Naive thymus-derived CD4-positive, alpha-beta T cell (primary cell): ENCODE measurements at regions of chr3 and their contacts with region 1.

Region 1: GRCh38 chr3:30353711-30354467 is 252.5 kb upstream of the TGFBR2 start:
- DNase-seq: peak; percentile 5 to 94 (median 87)
- ATAC-seq: peak; percentile 99
- H3K4me3 ChIP-seq: peak overlapping the region; percentile 36
- H3K4me3 Mint-ChIP-seq: peak overlapping the region; percentile 65 to 81 (median 68)
- H3K27ac ChIP-seq: no peak overlapping the region
- H3K27ac Mint-ChIP-seq: peak overlapping the region; percentile 23 to 96 (median 90)
- H3K4me1 ChIP-seq: peaks cover 38 to 66% of the 10 kb centered on the region in 2 donors
- H3K4me1 Mint-ChIP-seq: peaks cover 50 to 96% (median 88%) of the 10 kb centered on the region in 7 donors
- H3K27me3 ChIP-seq: no peaks in the 10 kb centered on the region
- H3K27me3 Mint-ChIP-seq: peaks cover 0 to 50% (median 0%) of the 10 kb centered on the region in 5 donors

Region 2: DNA sequence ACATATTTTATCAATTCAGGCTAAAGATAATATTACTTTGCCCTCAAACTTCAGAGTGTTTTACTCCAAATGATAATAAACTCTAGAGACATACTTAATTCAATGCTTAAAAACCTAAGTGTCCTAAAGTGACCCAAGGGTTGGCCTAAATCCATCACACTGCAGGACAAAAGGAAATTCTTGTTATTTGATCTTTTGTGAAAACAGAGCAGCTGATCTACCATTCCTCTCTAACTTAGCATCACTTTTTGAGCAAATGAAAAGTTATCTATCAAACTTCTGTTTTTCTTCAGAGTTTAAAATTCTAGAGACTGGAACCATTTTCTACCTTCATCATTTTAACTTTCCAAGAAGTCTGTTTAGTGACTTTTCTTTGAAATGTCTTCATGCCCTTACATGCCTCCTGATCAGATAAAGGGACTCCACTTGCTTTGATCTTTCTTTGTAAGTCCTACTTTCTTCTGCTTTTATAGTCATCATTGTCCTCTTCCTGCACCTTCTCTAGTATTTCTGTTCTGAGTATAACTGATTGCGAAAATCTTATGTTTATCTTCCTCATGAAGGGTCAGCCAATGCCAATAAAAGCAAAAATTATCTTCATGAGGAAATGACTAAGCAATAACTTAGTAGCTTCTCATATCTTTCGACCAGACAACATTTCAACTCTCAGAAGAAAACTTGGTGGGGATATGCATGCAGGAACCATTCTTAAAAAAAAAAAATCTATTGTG is 126.2 kb before region 1 on chr3:
- CTCF ChIA-PET with region 1: no interaction called
- POLR2A ChIA-PET with region 1: no interaction called
- intact Hi-C with region 1: loop called in 1 of 2 experiments (anchors 5 kb)
- DNase-seq: peak in 4 of 9 donors; percentile 1 to 10 (median 6)
- ATAC-seq: peak; percentile 78
- H3K4me3 ChIP-seq: no peak overlapping the region
- H3K4me3 Mint-ChIP-seq: peak overlapping the region in 8 of 10 donors; percentile 4 to 67 (median 36)
- H3K27ac ChIP-seq: no peak overlapping the region
- H3K27ac Mint-ChIP-seq: peak overlapping the region in 6 of 9 donors; percentile 3 to 83 (median 15)
- H3K4me1 ChIP-seq: peaks cover 0 to 9% of the 10 kb centered on the region in 2 donors
- H3K4me1 Mint-ChIP-seq: peaks cover 15 to 41% (median 20%) of the 10 kb centered on the region in 7 donors
- H3K27me3 ChIP-seq: no peaks in the 10 kb centered on the region
- H3K27me3 Mint-ChIP-seq: peaks cover 0 to 8% (median 0%) of the 10 kb centered on the region in 5 donors

Region 3: DNA sequence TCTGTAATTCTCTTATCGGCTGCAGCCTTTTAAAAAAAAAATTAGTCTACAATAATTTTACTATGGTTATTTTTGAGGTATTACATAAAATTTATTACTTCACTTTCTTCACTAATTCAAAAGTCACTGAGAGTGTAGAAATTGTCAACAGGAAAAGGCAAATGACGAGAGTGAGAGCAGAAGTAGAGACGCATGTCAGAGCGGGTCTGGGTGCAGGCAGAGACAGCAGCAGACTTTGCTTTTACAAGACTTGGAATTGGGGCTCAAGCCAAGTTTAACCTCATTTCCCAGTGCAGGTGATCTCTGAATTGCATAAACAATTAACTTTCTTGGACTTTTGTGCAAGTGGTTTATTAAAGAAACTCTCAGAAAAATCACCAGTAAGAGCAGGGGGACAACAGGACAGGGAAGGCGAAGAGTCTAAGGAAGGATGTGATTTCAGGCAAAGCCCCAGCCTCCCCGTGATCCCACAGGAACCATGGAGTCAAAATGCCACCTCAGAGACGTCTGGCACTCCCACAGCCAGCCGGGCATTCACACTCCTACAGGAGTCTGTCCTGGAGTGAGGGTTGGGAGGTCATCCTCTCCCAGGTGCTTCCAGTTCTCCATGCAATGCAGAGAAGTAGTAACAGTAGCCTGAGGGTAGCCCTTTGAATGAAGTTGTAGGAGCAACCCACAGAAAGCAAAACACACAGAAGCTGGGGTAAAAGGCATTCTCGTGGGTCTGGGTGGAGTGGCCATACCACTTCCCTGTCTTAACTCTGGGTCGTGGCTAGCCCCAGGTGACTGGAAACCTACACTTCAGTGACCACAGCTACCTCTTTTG is 21.5 kb before region 1 on chr3:
- CTCF ChIA-PET with region 1: no interaction called
- POLR2A ChIA-PET with region 1: interaction called, 6 read pairs
- intact Hi-C with region 1: loop called in 1 of 2 experiments (anchors 1 kb)
- DNase-seq: peak in 7 of 9 donors; percentile 45 to 83 (median 76)
- ATAC-seq: peak; percentile 89
- H3K4me3 ChIP-seq: peak overlapping the region; percentile 35
- H3K4me3 Mint-ChIP-seq: peak overlapping the region; percentile 63 to 91 (median 84)
- H3K27ac ChIP-seq: peak overlapping the region; percentile 28
- H3K27ac Mint-ChIP-seq: peak overlapping the region; percentile 74 to 99 (median 96)
- H3K4me1 ChIP-seq: peaks cover 0 to 30% of the 10 kb centered on the region in 2 donors
- H3K4me1 Mint-ChIP-seq: peaks cover 4 to 58% (median 46%) of the 10 kb centered on the region in 7 donors
- H3K27me3 ChIP-seq: no peaks in the 10 kb centered on the region
- H3K27me3 Mint-ChIP-seq: no peaks in the 10 kb centered on the region

Region 4: DNA sequence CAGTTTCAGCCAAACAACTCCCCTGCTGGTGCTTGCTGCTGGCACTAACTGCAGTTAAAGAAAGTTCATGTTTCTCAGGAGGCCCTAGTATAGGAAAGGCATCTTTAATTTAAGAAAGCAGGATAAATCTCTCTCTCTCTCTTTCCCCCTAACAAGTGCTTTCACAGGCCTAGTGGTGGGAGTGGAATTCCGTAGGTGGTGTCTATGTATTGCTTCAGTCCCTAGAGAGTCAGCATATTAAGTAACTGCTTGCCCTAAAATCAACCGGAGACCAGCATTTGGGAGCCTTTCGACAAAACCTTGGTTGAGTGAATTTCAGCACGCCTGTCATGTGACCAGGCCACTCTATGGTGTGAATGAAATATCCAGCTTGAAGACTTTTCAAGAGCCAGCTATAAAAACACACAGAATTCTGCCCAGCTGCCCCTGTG is 83.3 kb after region 1 on chr3:
- CTCF ChIA-PET with region 1: no interaction called
- POLR2A ChIA-PET with region 1: interaction called, 3 read pairs
- intact Hi-C with region 1: loop called in 1 of 2 experiments (anchors 5 kb)
- DNase-seq: no peak
- ATAC-seq: no peak
- H3K4me3 ChIP-seq: no peak overlapping the region
- H3K4me3 Mint-ChIP-seq: peak overlapping the region in 6 of 10 donors; percentile 12 to 77 (median 22)
- H3K27ac ChIP-seq: no peak overlapping the region
- H3K27ac Mint-ChIP-seq: peak overlapping the region in 5 of 9 donors; percentile 15 to 94 (median 75)
- H3K4me1 ChIP-seq: peaks cover 0 to 23% of the 10 kb centered on the region in 2 donors
- H3K4me1 Mint-ChIP-seq: peaks cover 6 to 47% (median 35%) of the 10 kb centered on the region in 7 donors
- H3K27me3 ChIP-seq: no peaks in the 10 kb centered on the region
- H3K27me3 Mint-ChIP-seq: no peaks in the 10 kb centered on the region

Region 5: DNA sequence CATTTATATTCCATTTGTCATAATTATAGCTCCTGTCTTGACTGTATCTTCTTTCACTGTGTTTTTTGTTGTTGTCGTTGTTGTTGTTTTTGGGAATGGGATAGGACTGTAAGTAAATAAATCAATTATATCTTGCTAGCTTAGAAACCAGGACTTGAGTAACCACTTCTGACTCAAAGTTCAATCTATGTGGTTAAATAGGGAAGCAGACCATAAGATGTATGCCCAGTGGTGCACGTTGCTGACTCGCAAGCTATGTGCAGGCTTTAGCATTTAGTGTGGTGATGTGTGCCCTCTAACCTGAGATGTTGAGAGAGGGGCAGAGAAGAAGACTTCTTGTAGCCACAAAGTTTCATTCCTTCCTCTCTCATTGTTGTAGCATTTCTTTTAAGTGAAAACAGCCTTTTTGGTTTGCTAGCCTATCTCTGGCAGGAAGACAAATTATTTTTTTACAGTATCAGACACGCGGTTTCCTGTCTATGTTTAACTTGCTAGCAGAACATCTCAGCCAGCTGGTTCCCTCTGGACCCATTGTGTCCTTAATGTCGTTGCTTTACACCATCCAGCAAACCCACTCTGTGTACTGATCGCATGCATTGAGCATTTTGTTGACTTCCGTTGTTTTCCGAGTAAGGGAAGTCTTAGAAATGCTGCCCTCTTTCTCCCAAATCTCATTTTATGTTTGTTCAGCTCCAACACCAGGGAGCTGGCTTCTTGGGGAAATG is 304.6 kb after region 1 on chr3:
- CTCF ChIA-PET with region 1: no interaction called
- POLR2A ChIA-PET with region 1: interaction called, 9 read pairs
- intact Hi-C with region 1: loop called in 1 of 2 experiments (anchors 1 kb)
- DNase-seq: peak in 7 of 9 donors; percentile 72 to 86 (median 84)
- ATAC-seq: peak; percentile 71
- H3K4me3 ChIP-seq: peak overlapping the region; percentile 24
- H3K4me3 Mint-ChIP-seq: peak overlapping the region; percentile 71 to 88 (median 80)
- H3K27ac ChIP-seq: peak overlapping the region; percentile 84
- H3K27ac Mint-ChIP-seq: peak overlapping the region; percentile 91 to 99 (median 97)
- H3K4me1 ChIP-seq: peaks cover 82 to 98% of the 10 kb centered on the region in 2 donors
- H3K4me1 Mint-ChIP-seq: peaks cover 67 to 100% (median 94%) of the 10 kb centered on the region in 7 donors
- H3K27me3 ChIP-seq: no peaks in the 10 kb centered on the region
- H3K27me3 Mint-ChIP-seq: no peaks in the 10 kb centered on the region

Region 6: GRCh38 chr3:31219131-31219843 is 865.4 kb after region 1 on chr3:
- CTCF ChIA-PET with region 1: no interaction called
- POLR2A ChIA-PET with region 1: no interaction called
- intact Hi-C with region 1: loop called (anchors 5 to 10 kb)
- DNase-seq: no peak
- ATAC-seq: peak; percentile 44
- H3K4me3 ChIP-seq: no peak overlapping the region
- H3K4me3 Mint-ChIP-seq: peak overlapping the region in 6 of 10 donors; percentile 2 to 54 (median 30)
- H3K27ac ChIP-seq: no peak overlapping the region
- H3K27ac Mint-ChIP-seq: peak overlapping the region in 4 of 9 donors; percentile 26 to 52 (median 42)
- H3K4me1 ChIP-seq: peaks cover 50 to 66% of the 10 kb centered on the region in 2 donors
- H3K4me1 Mint-ChIP-seq: peaks cover 64 to 98% (median 96%) of the 10 kb centered on the region in 7 donors
- H3K27me3 ChIP-seq: no peaks in the 10 kb centered on the region
- H3K27me3 Mint-ChIP-seq: peaks cover 0 to 2% (median 0%) of the 10 kb centered on the region in 5 donors